ENCODE measurements at regions of chr14 and their contacts with region 1.

Region 1: DNA sequence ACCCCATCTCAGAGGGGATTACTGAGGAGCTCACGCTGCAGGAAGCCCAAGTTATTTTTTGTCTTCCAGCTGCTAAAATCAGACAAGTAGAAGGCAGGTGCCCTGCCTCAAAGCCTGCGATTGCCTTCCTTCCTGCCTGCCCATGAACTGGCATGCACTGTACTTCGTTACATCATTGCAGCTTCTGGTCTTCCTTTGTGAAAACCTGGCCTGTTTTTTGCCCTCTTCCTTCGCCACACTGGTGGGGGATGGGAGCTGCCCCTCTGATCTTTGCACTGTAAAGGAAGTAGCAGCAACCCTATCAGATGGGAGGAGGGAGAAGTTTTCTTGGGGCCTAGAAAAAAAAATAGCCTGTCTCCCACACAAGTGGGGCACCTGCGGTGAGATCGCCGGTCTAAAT is 1098.7 kb downstream of the BCL11B start:
- DNase-seq: peak; percentile 45
- H3K4me3 Mint-ChIP-seq: peak overlapping the region; percentile 73
- H3K27ac Mint-ChIP-seq: peak overlapping the region; percentile 90
- H3K4me1 Mint-ChIP-seq: peaks cover 97% of the 10 kb centered on the region
- H3K27me3 Mint-ChIP-seq: no peaks in the 10 kb centered on the region

Region 2: DNA sequence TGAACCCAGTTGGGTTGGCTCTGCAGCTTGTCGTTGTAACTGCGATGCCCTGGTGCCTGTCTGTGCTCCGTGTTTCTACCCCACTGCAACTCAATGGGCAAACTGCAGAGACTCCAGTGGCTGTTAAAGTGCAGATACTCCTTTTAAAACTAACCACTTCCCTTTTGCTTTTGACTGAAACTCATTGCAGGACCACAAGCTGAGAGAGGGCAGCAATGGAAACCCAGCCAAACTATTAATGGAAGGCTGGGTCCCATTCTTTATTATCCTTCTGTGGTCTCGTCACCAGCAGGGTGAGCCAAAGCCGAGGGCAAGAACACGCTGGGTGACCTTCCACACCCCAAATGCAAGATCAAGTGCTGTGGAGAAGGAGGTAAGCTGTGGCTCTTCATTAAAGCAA is 465.7 kb before region 1 on chr14:
- intact Hi-C with region 1: loop called (anchors 5 kb)
- DNase-seq: no peak
- H3K4me3 Mint-ChIP-seq: peak overlapping the region; percentile 9
- H3K27ac Mint-ChIP-seq: no peak overlapping the region
- H3K4me1 Mint-ChIP-seq: peaks cover 79% of the 10 kb centered on the region
- H3K27me3 Mint-ChIP-seq: no peaks in the 10 kb centered on the region

Region 3: GRCh38 chr14:98189062-98189461 is 15.8 kb after region 1 on chr14:
- intact Hi-C with region 1: loop called (anchors 1 kb)
- DNase-seq: peak; percentile 38
- H3K4me3 Mint-ChIP-seq: peak overlapping the region; percentile 75
- H3K27ac Mint-ChIP-seq: peak overlapping the region; percentile 97
- H3K4me1 Mint-ChIP-seq: peaks cover 100% of the 10 kb centered on the region
- H3K27me3 Mint-ChIP-seq: no peaks in the 10 kb centered on the region

Region 4: GRCh38 chr14:98210045-98210672 is 36.9 kb after region 1 on chr14:
- intact Hi-C with region 1: no loop called
- DNase-seq: peak; percentile 35
- H3K4me3 Mint-ChIP-seq: peak overlapping the region; percentile 45
- H3K27ac Mint-ChIP-seq: peak overlapping the region; percentile 82
- H3K4me1 Mint-ChIP-seq: peaks cover 68% of the 10 kb centered on the region
- H3K27me3 Mint-ChIP-seq: peaks cover 3% of the 10 kb centered on the region

Region 5: DNA sequence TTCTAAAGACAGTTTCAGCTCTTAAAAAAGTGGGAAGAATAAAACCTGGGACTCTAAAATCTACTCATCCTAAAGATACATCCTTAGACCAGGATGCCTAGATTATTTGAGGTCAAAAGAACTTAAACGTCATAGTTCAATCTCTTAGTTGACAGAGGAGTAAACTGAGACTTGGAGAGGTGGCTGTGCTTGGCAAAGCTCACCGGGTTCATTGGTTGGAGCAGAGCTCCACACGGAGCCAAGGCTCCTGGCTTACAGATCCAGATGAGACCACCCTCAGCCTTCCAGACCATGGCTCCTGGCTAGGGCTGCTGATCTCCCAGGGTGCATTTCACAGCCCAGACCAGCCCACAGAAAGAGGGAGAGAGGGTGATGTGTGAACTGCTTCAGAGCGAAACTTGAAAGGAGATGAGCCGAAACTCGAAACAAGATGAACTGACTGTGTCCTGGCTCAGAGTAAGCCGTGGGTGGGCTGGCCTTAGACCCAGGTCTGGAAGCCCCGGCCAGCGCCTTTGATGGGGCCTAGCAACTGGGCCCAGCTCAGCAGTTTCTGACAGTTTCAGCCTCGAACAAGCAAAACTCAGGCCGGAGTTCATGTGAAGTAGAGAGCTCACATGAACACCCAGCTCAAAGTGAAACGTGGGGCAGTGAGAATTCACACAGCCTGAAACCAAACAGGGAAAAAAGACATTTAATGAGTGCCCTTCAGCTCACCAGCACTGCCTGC is 53.9 kb after region 1 on chr14:
- intact Hi-C with region 1: loop called (anchors 1 kb)
- DNase-seq: peak; percentile 36
- H3K4me3 Mint-ChIP-seq: peak overlapping the region; percentile 54
- H3K27ac Mint-ChIP-seq: peak overlapping the region; percentile 81
- H3K4me1 Mint-ChIP-seq: peaks cover 63% of the 10 kb centered on the region
- H3K27me3 Mint-ChIP-seq: no peaks in the 10 kb centered on the region